ENCODE measurements at regions of chr2 and their contacts with region 1.

Region 1: DNA sequence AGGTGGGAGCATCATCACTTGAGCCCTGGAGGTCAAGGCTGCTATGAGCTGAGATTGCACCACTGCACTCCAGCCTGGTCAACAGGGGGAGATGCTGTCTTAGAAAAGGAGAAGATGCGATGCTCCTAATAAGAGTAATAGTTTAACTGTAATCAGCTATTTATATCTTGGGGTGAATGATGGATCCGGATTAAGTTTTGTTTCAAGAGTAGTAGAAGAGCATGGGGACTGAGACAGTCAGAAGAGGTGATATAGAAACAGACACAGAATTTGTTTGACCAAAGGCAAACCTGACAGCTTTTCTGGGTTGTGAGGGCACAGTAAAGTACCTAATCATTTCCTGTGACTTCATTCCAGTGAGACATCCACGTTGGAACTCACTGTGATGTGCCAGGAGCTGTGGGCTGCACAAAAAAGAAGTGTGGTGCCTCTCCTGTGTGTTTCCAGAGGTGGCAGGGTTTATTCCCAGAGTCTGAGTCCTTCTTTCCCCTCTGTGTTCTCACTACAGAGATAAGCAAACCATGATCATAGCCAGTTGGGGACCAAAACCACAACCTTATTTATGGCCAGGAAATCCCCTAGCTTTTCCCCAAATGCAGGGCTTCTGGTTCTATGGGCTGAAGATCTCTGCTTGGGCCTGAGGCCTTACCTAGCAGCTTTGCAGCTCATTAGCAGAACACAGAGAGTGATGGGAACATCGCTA is 113.7 kb downstream of the XRCC5 start:
- DNase-seq: peak; percentile 67
- ATAC-seq: peak; percentile 60
- H3K4me3 ChIP-seq: no peak overlapping the region
- H3K27ac ChIP-seq: no peak overlapping the region; the same call in 1 of the 2 replicates
- H3K4me1 ChIP-seq: peaks cover 7% of the 10 kb centered on the region
- H3K27me3 ChIP-seq: no peaks in the 10 kb centered on the region
- CTCF ChIP-seq: peak; percentile 57
- POLR2A ChIP-seq: no peak
- RAD21 ChIP-seq: peak; percentile 64

Region 2: DNA sequence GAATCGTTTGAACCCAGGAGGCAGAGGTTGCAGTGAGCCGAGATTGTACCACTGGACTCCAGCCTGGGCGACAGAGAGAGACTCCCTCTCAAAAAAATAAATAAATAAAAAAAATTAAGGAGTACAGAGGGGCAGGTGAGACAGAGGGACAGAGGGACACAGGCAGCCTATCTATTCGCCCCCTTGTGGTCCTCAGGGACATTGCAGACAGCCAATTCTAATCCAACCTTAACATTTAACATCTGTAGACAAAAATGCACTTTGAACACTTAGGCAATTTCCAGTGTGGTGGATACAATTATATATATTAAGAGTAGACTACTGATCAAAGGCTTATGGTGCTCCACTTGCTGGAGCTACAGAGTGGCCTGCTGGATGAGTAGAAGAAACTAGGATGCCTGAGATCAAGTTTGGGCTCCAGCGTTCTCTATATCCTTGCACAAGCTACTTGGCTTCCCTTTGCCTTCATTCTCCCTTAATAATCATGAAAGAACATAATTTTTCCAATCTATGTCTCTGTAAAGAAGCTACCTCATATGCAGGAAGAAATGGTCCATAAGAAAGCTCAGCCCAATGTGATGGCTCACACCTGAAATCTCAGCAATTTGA is 181.3 kb after region 1 on chr2:
- CTCF ChIA-PET with region 1: interaction called, 7 read pairs
- POLR2A ChIA-PET with region 1: no interaction called
- dilution Hi-C with region 1: no loop called
- in situ Hi-C with region 1: loop called (anchors 25 kb)
- intact Hi-C with region 1: loop called (anchors 2 kb)
- DNase-seq: peak; percentile 37
- ATAC-seq: peak; percentile 91
- H3K4me3 ChIP-seq: no peak overlapping the region
- H3K27ac ChIP-seq: no peak overlapping the region
- H3K4me1 ChIP-seq: no peaks in the 10 kb centered on the region
- H3K27me3 ChIP-seq: no peaks in the 10 kb centered on the region; the same call in 1 of the 2 replicates
- CTCF ChIP-seq: peak; percentile 76
- POLR2A ChIP-seq: no peak
- RAD21 ChIP-seq: peak; percentile 82

Region 3: DNA sequence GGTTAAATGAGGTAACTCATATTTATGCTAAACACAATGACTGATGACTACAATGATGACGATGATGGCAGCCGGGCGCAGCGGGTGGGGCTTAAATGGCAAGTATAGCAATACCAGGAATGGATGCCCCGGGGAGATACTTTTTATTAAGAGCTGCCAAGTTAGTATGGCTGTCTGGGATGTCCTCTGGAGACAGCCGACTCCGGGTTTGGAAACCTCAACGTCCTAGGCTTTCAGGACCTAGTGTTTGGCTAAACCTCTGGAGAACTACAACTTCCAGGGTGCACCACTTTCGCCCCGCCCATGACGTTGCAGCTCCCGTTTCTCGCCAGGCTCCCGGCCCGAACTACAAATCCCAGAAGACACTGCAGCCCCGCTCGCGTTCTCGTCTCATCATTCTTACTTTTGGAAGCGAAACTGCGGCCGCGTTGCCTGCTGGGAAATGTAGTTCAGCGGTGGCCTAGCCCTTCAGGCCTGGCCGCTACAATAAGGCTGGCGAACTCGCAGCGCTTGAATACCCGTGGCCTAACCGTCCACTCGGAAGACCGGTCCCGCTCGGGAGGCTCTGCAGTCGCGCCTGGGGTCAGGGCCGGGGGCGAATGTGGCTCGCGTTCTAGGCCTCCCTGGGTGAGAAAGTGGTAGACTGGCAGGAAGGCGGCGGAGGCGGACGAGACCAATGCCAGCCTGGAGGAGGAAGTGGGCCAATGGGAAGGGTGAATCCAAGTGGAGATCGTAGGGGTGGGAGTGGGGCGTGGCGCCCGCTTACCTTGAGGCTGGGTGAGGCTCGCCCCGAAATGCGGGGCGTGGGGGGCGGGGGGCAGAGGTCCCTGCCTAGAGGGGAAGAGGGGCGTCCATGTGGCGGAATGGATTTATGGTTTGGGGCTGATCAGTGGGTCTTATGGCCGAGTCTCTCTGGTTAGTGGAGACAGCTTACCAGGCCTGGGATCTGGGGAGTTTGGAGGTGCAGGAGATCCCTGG is 189.5 kb after region 1 on chr2 and contains the start of gene SMARCAL1:
- CTCF ChIA-PET with region 1: no interaction called
- POLR2A ChIA-PET with region 1: no interaction called
- dilution Hi-C with region 1: no loop called
- in situ Hi-C with region 1: loop called (anchors 25 kb)
- intact Hi-C with region 1: no loop called
- DNase-seq: peak; percentile 97
- ATAC-seq: peak; percentile 96
- H3K4me3 ChIP-seq: peak within 1 kb of the TSS; percentile 66
- H3K27ac ChIP-seq: peak within 1 kb of the TSS; percentile 99
- H3K4me1 ChIP-seq: peaks cover 2% of the 10 kb centered on the region; the same call in 1 of the 2 replicates
- H3K27me3 ChIP-seq: no peaks in the 10 kb centered on the region
- CTCF ChIP-seq: no peak
- POLR2A ChIP-seq: no peak; the same call in 1 of the 2 replicates
- RAD21 ChIP-seq: no peak
- total RNA-seq, gene SMARCAL1: 10.8 and 13.6 TPM in 2 replicates

Region 4: GRCh38 chr2:216666461-216667233 is 443.8 kb after region 1 on chr2:
- CTCF ChIA-PET with region 1: no interaction called
- POLR2A ChIA-PET with region 1: no interaction called
- dilution Hi-C with region 1: no loop called
- in situ Hi-C with region 1: loop called (anchors 10 kb)
- intact Hi-C with region 1: loop called (anchors 5 kb)
- DNase-seq: peak; percentile 71
- ATAC-seq: peak; percentile 28
- H3K4me3 ChIP-seq: no peak overlapping the region
- H3K27ac ChIP-seq: no peak overlapping the region
- H3K4me1 ChIP-seq: no peaks in the 10 kb centered on the region; the same call in 1 of the 2 replicates
- H3K27me3 ChIP-seq: no peaks in the 10 kb centered on the region
- CTCF ChIP-seq: peak; percentile 97
- POLR2A ChIP-seq: peak; percentile 71
- RAD21 ChIP-seq: peak; percentile 99